ENCODE measurements at regions of chr4 and their contacts with region 1.

Region 1: DNA sequence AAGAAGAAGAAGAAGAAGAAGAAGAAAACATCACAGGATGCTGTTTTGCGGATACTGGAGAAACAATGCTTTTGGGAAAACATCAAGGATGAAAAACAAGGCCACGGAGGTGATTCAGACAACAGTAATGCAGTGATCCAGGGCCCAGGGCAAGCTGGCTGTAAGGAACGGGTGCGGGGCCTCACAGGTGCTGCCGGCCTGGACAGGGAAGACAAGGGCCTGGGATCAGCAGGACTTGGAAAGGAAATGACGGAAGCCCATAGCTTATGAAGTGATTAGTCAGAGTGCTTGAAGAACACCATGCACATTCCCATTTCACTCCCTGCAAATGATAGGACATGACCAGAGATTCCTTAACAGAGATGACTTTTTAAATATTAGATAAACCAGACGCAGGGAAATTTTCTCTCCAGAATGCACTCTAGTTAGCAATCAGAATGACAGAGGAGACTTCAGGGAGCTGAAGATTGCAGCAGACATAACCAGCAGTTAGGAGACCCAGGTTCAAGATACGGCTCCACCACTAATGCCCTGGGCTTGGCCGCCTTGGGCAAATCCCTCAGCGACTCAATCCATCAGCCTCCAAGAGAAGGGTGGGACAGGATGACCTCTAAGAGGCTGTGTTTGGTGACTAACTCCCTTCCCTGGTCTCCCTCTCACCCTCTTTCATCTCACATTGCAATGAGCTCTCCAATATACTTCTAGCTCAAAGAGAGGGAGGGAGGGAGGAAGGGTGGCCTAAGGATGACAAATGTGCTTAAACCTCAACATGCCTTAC is 54.1 kb downstream of the APBB2 start:
- DNase-seq: peak; percentile 98
- H3K4me3 ChIP-seq: no peak overlapping the region
- H3K27ac ChIP-seq: peak overlapping the region; percentile 92
- H3K4me1 ChIP-seq: peaks cover 70% of the 10 kb centered on the region
- H3K27me3 ChIP-seq: no peaks in the 10 kb centered on the region
- CTCF ChIP-seq: no peak
- POLR2A ChIP-seq: peak; percentile 71

Region 2: GRCh38 chr4:40924096-40924792 is 236.0 kb before region 1 on chr4:
- CTCF ChIA-PET with region 1: interaction called, 5 read pairs
- POLR2A ChIA-PET with region 1: interaction called, 3 read pairs
- dilution Hi-C with region 1: no loop called
- intact Hi-C with region 1: loop called (anchors 2 kb)
- DNase-seq: peak; percentile 68
- H3K4me3 ChIP-seq: no peak overlapping the region
- H3K27ac ChIP-seq: no peak overlapping the region
- H3K4me1 ChIP-seq: no peaks in the 10 kb centered on the region
- H3K27me3 ChIP-seq: no peaks in the 10 kb centered on the region
- CTCF ChIP-seq: peak; percentile 90 to 94
- POLR2A ChIP-seq: no peak

Region 3: DNA sequence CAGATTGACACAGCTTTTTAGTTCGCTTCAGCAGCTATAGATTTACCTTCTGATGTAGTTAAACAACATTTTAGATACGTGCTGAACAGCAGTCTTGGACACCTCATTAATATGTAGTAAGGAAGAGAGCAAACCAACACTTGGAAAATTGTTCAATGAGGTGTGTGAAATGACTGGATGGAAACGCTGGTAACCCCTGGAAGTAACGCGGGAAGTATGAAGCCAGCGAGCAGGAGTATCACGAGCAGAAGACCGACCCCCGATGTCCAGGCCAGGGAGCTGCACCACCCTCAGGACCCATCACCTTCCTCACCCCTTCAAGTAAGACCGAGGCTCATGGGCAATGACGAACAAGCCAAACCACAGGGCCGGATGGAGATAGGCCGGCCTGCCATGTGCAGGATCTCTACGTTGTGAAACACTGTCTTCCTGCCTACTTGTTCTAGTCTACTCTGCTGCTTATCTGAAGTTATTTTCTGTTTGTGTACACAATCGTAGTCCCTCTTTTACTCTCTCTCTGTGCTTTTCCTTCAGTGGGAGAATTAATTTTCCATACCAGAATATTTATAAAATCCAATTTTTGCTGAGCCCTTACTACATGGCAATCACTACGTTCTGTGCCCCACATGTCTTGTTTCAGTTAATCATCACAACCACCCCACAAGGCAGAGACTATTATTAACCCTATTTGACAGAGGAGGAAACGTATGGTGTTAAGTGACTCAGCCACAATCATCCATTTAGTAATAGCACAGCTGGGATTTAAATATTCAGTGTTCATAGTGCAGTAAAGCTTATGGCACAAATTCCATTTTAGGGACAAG is 167.5 kb before region 1 on chr4:
- CTCF ChIA-PET with region 1: no interaction called
- POLR2A ChIA-PET with region 1: no interaction called
- dilution Hi-C with region 1: no loop called
- intact Hi-C with region 1: loop called (anchors 1 kb)
- DNase-seq: peak; percentile 82
- H3K4me3 ChIP-seq: no peak overlapping the region
- H3K27ac ChIP-seq: peak overlapping the region; percentile 84
- H3K4me1 ChIP-seq: peaks cover 62% of the 10 kb centered on the region
- H3K27me3 ChIP-seq: no peaks in the 10 kb centered on the region
- CTCF ChIP-seq: no peak
- POLR2A ChIP-seq: no peak

Region 4: DNA sequence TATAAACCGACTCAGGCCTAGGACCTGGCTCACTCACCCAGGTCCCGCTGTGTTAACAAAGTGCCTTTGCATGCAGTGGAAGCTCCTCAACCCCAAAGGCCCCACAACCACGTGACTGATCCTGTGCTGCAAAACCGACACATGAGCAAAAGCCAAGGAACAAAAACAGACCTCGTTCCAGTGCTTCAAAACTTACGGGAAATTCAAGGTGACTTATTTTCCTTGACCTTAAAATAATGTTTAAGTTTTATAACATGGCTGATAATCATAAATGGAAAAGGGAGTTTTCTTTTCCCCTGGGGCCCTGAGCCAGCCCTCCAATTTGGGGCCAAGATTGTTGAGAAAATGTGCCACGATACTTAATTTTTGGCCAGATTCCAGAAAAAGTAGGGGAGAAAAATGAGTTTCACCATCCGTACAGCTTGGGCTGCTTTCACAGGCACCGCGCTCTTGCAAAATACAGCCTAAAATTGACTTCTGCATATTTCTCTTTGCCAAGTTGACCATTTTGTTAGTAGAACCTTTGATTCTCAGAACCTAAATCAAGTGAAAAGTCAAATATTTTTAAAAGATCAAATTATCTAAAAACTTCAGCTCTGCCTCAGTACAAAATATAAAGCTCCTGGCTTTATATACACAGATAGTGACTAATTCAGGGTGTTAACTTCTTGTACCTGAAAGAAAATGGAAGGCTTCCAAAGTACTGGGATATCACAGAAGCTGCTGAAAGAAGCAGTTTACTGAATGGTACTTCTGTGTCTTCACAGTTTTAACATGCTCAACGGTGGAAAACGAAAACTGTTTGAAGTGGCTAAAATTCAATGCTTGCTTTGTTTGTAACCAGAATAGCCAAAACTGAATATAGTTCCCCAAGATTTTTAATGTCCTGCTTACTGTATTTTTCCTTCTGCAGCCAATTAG is 39.6 kb before region 1 on chr4:
- CTCF ChIA-PET with region 1: interaction called, 4 read pairs
- POLR2A ChIA-PET with region 1: no interaction called
- dilution Hi-C with region 1: no loop called
- intact Hi-C with region 1: loop called (anchors 1 kb)
- DNase-seq: peak; percentile 78
- H3K4me3 ChIP-seq: no peak overlapping the region
- H3K27ac ChIP-seq: peak overlapping the region; percentile 45
- H3K4me1 ChIP-seq: peaks cover 14% of the 10 kb centered on the region
- H3K27me3 ChIP-seq: no peaks in the 10 kb centered on the region
- CTCF ChIP-seq: no peak
- POLR2A ChIP-seq: no peak

Region 5: GRCh38 chr4:41177016-41177415 is 16.8 kb after region 1 on chr4:
- CTCF ChIA-PET with region 1: interaction called, 21 read pairs
- POLR2A ChIA-PET with region 1: interaction called, 3 read pairs
- dilution Hi-C with region 1: no loop called
- intact Hi-C with region 1: loop called (anchors 1 kb)
- DNase-seq: peak; percentile 64
- H3K4me3 ChIP-seq: no peak overlapping the region
- H3K27ac ChIP-seq: peak overlapping the region; percentile 72
- H3K4me1 ChIP-seq: peaks cover 59% of the 10 kb centered on the region
- H3K27me3 ChIP-seq: no peaks in the 10 kb centered on the region
- CTCF ChIP-seq: no peak
- POLR2A ChIP-seq: no peak

Region 6: DNA sequence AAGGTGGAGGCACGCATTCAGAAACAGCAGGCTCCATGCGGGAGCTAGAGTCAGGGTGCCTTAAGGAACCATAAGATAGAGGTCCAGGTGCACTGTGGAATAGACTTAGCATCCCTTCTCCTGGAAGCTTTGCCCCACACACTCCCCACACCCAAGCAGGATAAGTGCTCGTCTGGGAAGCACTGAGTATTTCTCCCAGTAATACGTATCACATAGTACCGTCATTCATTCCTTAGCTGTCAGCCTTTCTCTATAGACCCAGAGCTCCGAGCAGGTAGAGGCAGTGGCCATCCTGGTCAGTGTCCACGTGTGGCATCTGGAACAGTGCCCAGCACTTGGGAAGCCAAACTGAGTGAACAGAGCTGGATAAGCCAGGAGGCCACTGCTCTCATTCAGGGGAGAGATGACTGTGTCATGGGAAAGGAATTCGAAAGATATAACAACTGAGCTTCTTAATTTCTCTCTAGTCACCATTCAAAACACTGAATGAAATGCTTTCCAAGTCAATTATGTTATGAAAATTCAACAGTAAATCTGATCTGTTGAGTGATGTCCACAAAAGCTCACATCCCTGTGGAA is 44.3 kb after region 1 on chr4:
- CTCF ChIA-PET with region 1: interaction called, 17 read pairs
- POLR2A ChIA-PET with region 1: interaction called, 17 read pairs
- dilution Hi-C with region 1: no loop called
- intact Hi-C with region 1: loop called (anchors 1 kb)
- DNase-seq: peak; percentile 80
- H3K4me3 ChIP-seq: no peak overlapping the region
- H3K27ac ChIP-seq: peak overlapping the region; percentile 63
- H3K4me1 ChIP-seq: peaks cover 85% of the 10 kb centered on the region
- H3K27me3 ChIP-seq: no peaks in the 10 kb centered on the region
- CTCF ChIP-seq: no peak
- POLR2A ChIP-seq: no peak

Region 7: DNA sequence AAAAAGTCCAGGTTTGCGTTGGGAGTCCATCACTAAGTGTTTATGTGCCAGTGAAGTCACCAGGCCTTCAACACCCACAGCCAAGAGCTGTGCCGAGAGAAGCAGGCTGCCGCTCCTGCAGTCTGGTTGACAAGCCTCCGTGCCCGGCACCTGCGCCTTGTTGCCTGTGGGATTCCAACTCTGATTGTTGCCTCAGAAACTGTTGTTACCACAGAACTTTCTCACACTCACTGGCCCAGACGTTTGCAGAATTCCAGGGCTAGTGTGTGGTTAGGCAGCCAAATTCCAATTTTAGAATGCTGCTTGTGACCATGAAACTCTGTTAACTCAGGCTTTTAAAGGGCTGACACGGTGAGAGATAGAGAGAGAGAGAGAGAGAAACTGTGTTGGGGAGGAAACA is 258.2 kb after region 1 on chr4:
- CTCF ChIA-PET with region 1: no interaction called
- POLR2A ChIA-PET with region 1: no interaction called
- dilution Hi-C with region 1: no loop called
- intact Hi-C with region 1: no loop called
- DNase-seq: no peak
- H3K4me3 ChIP-seq: no peak overlapping the region
- H3K27ac ChIP-seq: no peak overlapping the region
- H3K4me1 ChIP-seq: peaks cover 2% of the 10 kb centered on the region
- H3K27me3 ChIP-seq: peaks cover 11 to 12% of the 10 kb centered on the region in 2 experiments
- CTCF ChIP-seq: no peak
- POLR2A ChIP-seq: no peak

Region 8: DNA sequence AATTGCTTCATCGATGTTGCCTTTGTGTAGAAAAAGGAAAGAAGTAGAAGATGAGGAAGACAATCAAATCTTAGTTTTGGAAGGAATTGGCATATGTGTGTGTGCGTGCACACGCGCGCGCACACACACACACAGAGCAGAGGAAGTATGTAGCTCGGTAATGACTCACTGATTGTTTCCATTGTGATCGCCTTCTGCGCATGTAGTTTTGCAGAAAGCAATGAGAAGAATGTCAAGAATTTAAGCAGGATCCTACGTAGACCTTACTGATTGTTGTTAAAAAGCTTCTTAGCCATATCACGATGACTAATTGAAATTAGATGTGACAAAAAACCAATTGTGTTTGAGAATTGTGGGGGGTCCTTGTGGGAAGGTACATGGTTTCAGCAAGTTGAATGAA is 364.9 kb after region 1 on chr4:
- CTCF ChIA-PET with region 1: no interaction called
- POLR2A ChIA-PET with region 1: no interaction called
- dilution Hi-C with region 1: no loop called
- intact Hi-C with region 1: loop called (anchors 1 kb)
- DNase-seq: peak; percentile 96
- H3K4me3 ChIP-seq: no peak overlapping the region
- H3K27ac ChIP-seq: peak overlapping the region; percentile 98
- H3K4me1 ChIP-seq: peaks cover 21% of the 10 kb centered on the region
- H3K27me3 ChIP-seq: no peaks in the 10 kb centered on the region
- CTCF ChIP-seq: no peak
- POLR2A ChIP-seq: no peak